ENCODE measurements at regions of chr17 and their contacts with region 1.

Region 1: DNA sequence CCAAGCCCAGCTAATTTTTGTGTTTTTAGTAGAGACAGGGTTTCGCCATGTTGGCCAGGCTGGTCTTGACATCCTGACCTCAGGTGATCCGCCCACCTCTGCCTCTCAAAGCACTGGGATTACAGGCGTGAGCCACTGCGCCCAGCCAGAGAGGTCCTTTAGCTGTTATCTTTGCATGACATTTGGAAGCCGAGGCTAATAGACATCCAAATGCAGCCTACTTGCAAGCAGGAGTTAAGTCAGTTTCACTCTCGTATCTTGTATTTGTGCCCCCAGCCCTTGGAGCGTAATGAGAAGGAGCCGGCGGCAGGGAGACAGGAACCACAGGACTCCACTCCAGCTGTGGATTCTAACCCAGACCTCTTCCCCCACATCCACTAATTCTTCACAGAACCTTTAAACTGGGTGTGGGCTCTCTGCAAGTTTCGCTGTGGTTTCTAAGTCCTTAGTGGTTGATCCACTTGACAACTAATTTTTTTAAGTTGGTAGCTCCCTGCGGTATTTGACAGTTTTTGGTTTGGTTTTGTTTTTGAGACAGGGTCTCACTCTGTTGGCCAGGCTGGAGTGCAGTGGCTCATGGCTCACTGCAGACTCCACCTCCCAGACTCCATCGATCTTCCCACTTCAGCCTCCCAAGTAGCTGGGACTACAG is 3.1 kb upstream of the CYTH1 start:
- DNase-seq: no peak
- H3K4me3 ChIP-seq: no peak overlapping the region
- H3K27ac ChIP-seq: no peak overlapping the region
- H3K4me1 ChIP-seq: no peaks in the 10 kb centered on the region; a peak in 2 of 7 replicates
- H3K27me3 ChIP-seq: no peaks in the 10 kb centered on the region; a peak in 1 of 7 replicates
- CTCF ChIP-seq: no peak
- EP300 ChIP-seq: no peak
- POLR2A ChIP-seq: no peak
- RAD21 ChIP-seq: no peak

Region 2: DNA sequence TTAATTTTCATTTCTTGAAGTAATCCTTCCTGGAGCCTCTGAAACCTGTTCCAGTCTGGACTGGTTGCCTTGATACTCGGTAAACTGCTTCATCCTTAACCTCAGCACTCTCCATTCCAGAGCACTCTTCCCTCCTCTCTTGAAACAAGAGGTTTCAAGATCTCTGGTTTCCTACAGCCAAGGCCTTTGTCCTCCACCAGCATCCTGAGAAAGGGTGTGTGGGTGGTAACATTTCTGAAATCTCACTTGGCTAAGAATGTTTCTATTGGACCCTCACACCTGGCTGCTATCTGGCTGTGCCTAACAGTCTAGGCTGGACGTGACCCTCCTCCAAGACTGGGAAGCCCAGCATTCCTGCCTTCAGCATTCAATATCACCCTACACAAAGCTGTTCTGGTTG is 102.8 kb before region 1 on chr17:
- CTCF ChIA-PET with region 1: no interaction called
- POLR2A ChIA-PET with region 1: no interaction called
- DNase-seq: no peak
- H3K4me3 ChIP-seq: no peak overlapping the region
- H3K27ac ChIP-seq: no peak overlapping the region
- H3K4me1 ChIP-seq: peaks cover 0 to 2% (median under 1%) of the 10 kb centered on the region in 4 experiments; a peak in 1 of 7 replicates
- H3K27me3 ChIP-seq: no peaks in the 10 kb centered on the region
- CTCF ChIP-seq: no peak
- EP300 ChIP-seq: no peak
- POLR2A ChIP-seq: no peak
- RAD21 ChIP-seq: no peak

Region 3: DNA sequence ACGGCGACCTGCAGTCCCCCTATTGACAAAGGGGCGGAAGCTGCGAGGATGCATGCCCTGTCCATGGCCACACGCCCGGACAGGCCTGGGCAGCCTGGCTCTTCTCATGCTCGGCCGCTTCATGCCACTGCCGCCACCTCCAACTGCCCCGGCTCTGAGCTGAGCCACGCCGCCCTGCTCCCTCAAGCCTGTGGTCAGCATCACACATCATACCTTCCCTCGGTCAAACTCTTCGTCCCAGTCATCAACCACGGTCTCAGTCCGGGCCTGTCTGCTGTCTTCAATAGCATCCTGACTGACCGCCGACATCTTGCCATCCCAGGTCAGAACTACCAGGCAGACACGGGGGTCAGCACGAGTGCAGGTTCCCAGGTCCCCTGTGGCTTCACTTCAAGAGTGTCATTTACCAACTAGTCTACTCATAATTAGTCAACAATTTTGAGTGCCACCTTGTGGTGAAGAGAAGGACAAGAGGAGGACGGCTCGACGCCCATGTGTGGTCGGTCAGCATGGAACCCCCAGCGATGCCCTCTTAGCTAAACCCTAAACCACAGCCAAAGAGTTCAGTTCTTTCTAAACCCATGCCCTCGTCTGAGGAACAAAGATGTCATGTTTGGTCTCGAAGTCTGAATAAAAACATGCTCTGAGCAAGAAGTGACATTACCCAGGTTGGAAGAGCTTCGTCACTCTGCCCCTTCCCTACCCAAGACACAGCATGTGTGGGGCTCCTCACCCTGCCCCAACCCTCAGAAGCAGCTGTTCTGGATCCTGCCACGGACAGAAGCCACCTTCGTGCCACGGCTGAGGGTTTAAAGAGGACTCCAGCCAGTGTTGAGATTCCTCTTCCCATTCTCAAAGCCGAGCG is 13.8 kb after region 1 on chr17:
- CTCF ChIA-PET with region 1: interaction called, 11 read pairs
- POLR2A ChIA-PET with region 1: interaction called, 11 read pairs
- DNase-seq: no peak
- H3K4me3 ChIP-seq: no peak overlapping the region
- H3K27ac ChIP-seq: no peak overlapping the region
- H3K4me1 ChIP-seq: no peaks in the 10 kb centered on the region
- H3K27me3 ChIP-seq: no peaks in the 10 kb centered on the region
- CTCF ChIP-seq: peak; percentile 11 to 42 (median 23); a peak in 3 of 4 replicates
- EP300 ChIP-seq: no peak
- POLR2A ChIP-seq: no peak
- RAD21 ChIP-seq: peak in 1 of 2 experiments; percentile 23; a peak in 3 of 4 replicates

Measured in H1 (cell line).